ENCODE measurements at regions of chr21 and their contacts with region 1.

Region 1: DNA sequence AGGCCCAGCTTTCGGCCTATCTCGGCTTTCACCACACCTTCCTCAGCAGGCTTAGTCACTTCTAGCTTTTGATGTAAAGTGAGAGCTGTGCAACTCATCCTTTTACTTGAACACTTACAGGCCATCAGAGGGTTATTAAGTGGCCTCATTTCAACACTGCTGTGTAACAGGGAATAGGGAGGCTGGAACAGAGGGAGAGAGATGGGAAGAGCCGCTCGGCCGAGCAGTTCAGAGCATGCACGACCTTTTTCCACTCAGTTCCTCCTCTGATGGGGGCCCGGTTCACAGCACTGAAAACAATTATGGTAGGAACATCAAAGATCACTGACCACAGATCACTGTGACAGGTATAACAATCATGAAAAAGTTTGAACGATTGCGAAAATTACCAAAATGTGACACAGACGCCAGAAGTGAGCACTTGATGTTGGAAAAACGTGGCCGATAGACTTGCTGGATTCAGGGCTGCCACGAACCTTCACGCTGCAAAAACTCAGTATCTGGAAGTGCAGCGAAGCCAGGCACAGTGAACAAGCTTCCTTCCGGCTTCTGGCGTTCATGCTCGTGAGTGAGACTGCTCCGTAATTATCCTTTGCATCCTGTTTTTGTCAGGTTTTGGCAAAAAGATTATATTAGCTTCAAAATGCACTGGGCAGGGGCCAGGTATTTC is 28.6 kb downstream of the AGPAT3 start:
- DNase-seq: no peak
- H3K4me3 ChIP-seq: no peak overlapping the region
- H3K27ac ChIP-seq: no peak overlapping the region
- H3K4me1 ChIP-seq: no peaks in the 10 kb centered on the region
- H3K27me3 ChIP-seq: no peaks in the 10 kb centered on the region
- CTCF ChIP-seq: no peak

Region 2: GRCh38 chr21:43827015-43827611 is 66.6 kb before region 1 on chr21:
- CTCF ChIA-PET with region 1: no interaction called
- POLR2A ChIA-PET with region 1: interaction called, 12 read pairs
- intact Hi-C with region 1: no loop called
- DNase-seq: peak in 1 of 2 experiments; percentile 35
- H3K4me3 ChIP-seq: no peak overlapping the region
- H3K27ac ChIP-seq: no peak overlapping the region
- H3K4me1 ChIP-seq: no peaks in the 10 kb centered on the region
- H3K27me3 ChIP-seq: peaks cover 3% of the 10 kb centered on the region; the same call in 1 of the 2 replicates
- CTCF ChIP-seq: no peak

Region 3: GRCh38 chr21:43949499-43950208 is 56.0 kb after region 1 on chr21:
- CTCF ChIA-PET with region 1: no interaction called
- POLR2A ChIA-PET with region 1: no interaction called
- intact Hi-C with region 1: no loop called
- DNase-seq: no peak
- H3K4me3 ChIP-seq: no peak overlapping the region
- H3K27ac ChIP-seq: no peak overlapping the region
- H3K4me1 ChIP-seq: no peaks in the 10 kb centered on the region
- H3K27me3 ChIP-seq: no peaks in the 10 kb centered on the region
- CTCF ChIP-seq: no peak

Measured in PC-9 (cell line).